PC-9 (cell line): ENCODE measurements at regions of chr3 and their contacts with region 1.

Region 1: GRCh38 chr3:48151058-48151806 is 37.0 kb downstream of the CDC25A start:
- DNase-seq: peak; percentile 52 to 83
- H3K4me3 ChIP-seq: no peak overlapping the region
- H3K27ac ChIP-seq: no peak overlapping the region
- H3K4me1 ChIP-seq: peaks cover 18% of the 10 kb centered on the region
- H3K27me3 ChIP-seq: no peaks in the 10 kb centered on the region
- CTCF ChIP-seq: peak; percentile 83

Region 2: GRCh38 chr3:47522082-47522987 is 628.9 kb before region 1 on chr3:
- CTCF ChIA-PET with region 1: interaction called, 3 read pairs
- POLR2A ChIA-PET with region 1: interaction called, 3 read pairs
- intact Hi-C with region 1: loop called (anchors 1 kb)
- DNase-seq: peak; percentile 73
- H3K4me3 ChIP-seq: no peak overlapping the region
- H3K27ac ChIP-seq: no peak overlapping the region
- H3K4me1 ChIP-seq: no peaks in the 10 kb centered on the region
- H3K27me3 ChIP-seq: no peaks in the 10 kb centered on the region
- CTCF ChIP-seq: peak; percentile 85

Region 3: GRCh38 chr3:47836986-47837385 is 314.2 kb before region 1 on chr3:
- CTCF ChIA-PET with region 1: interaction called, 6 read pairs
- POLR2A ChIA-PET with region 1: no interaction called
- intact Hi-C with region 1: loop called (anchors 1 kb)
- DNase-seq: no peak
- H3K4me3 ChIP-seq: no peak overlapping the region
- H3K27ac ChIP-seq: no peak overlapping the region
- H3K4me1 ChIP-seq: no peaks in the 10 kb centered on the region
- H3K27me3 ChIP-seq: no peaks in the 10 kb centered on the region
- CTCF ChIP-seq: no peak

Region 4: DNA sequence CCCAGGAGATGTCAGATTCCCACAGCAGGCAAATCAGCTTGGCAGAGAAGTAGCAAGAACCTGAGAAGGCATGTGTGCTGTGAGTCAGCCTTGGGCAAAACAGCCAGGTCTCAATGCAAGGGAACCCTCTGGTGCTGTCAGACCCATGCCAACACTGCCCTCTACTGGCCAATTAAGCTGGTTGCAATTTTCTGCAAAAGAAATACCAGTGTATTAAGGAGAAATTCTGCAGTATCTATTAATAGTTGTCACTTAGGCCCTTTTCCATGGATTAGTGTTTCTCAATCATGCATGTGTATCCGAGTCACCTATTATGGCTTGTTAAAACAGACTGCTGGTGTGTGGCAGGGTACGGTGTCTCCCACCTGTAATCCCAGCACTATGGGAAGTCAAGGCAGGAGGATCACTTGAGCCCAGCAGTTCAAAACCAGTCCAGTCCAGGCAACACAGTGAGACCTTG is 161.2 kb before region 1 on chr3:
- CTCF ChIA-PET with region 1: interaction called, 9 read pairs
- POLR2A ChIA-PET with region 1: no interaction called
- intact Hi-C with region 1: loop called (anchors 1 kb)
- DNase-seq: peak; percentile 69 to 78
- H3K4me3 ChIP-seq: no peak overlapping the region
- H3K27ac ChIP-seq: no peak overlapping the region
- H3K4me1 ChIP-seq: peaks cover 6% of the 10 kb centered on the region
- H3K27me3 ChIP-seq: no peaks in the 10 kb centered on the region
- CTCF ChIP-seq: peak; percentile 84